HEK293 (cell line): ENCODE measurements at regions of chr9 and their contacts with region 1.

Region 1: GRCh38 chr9:134551650-134552348 is 89.8 kb upstream of the COL5A1 start:
- H3K4me3 ChIP-seq: no peak overlapping the region
- H3K27ac ChIP-seq: no peak overlapping the region; the same call in 1 of the 2 replicates
- H3K4me1 ChIP-seq: 0 out of 2 replicates have a peak, but pooled peaks cover 3% of the 10 kb centered on the region
- CTCF ChIP-seq: no peak

Region 2: GRCh38 chr9:134602547-134603309 is 50.9 kb after region 1 on chr9:
- CTCF ChIA-PET with region 1: interaction called, 4 read pairs
- POLR2A ChIA-PET with region 1: interaction called, 10 read pairs
- H3K4me3 ChIP-seq: no peak overlapping the region
- H3K27ac ChIP-seq: no peak overlapping the region
- H3K4me1 ChIP-seq: no peaks in the 10 kb centered on the region
- CTCF ChIP-seq: no peak

Region 3: DNA sequence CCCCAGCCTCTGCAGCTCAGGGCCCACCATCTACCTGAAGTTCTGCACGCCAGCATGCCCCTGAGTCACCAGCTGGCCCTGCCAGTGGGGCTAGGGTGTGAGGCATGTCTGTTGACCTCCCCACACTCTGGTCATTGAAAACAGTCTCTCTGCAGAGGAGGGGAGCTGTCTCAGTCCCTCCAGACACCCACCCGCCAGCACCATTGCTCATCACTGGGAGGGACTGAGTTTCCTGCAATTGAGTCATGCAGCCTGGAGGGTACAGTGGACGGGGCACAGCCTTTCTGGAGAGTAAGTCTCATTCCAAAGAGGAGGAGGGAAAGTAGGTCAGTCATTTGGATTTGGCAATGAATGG is 73.0 kb after region 1 on chr9:
- CTCF ChIA-PET with region 1: no interaction called
- POLR2A ChIA-PET with region 1: no interaction called
- H3K4me3 ChIP-seq: no peak overlapping the region
- H3K27ac ChIP-seq: no peak overlapping the region
- H3K4me1 ChIP-seq: no peaks in the 10 kb centered on the region
- CTCF ChIP-seq: no peak